Panc1 (cell line): ENCODE measurements at regions of chr7 and their contacts with region 1.

Region 1: GRCh38 chr7:101990811-101991418 is 173.5 kb downstream of the CUX1 start:
- DNase-seq: no peak
- ATAC-seq: no peak
- H3K4me3 ChIP-seq: no peak overlapping the region
- H3K27ac ChIP-seq: no peak overlapping the region
- H3K4me1 ChIP-seq: no peaks in the 10 kb centered on the region
- H3K27me3 ChIP-seq: no peaks in the 10 kb centered on the region
- CTCF ChIP-seq: no peak

Region 2: GRCh38 chr7:101333912-101334311 is 657.0 kb before region 1 on chr7:
- CTCF ChIA-PET with region 1: no interaction called
- POLR2A ChIA-PET with region 1: interaction called, 10 read pairs
- in situ Hi-C with region 1: no loop called
- intact Hi-C with region 1: no loop called
- DNase-seq: no peak
- ATAC-seq: no peak
- H3K4me3 ChIP-seq: no peak overlapping the region
- H3K27ac ChIP-seq: no peak overlapping the region
- H3K4me1 ChIP-seq: no peaks in the 10 kb centered on the region
- H3K27me3 ChIP-seq: no peaks in the 10 kb centered on the region
- CTCF ChIP-seq: no peak

Region 3: DNA sequence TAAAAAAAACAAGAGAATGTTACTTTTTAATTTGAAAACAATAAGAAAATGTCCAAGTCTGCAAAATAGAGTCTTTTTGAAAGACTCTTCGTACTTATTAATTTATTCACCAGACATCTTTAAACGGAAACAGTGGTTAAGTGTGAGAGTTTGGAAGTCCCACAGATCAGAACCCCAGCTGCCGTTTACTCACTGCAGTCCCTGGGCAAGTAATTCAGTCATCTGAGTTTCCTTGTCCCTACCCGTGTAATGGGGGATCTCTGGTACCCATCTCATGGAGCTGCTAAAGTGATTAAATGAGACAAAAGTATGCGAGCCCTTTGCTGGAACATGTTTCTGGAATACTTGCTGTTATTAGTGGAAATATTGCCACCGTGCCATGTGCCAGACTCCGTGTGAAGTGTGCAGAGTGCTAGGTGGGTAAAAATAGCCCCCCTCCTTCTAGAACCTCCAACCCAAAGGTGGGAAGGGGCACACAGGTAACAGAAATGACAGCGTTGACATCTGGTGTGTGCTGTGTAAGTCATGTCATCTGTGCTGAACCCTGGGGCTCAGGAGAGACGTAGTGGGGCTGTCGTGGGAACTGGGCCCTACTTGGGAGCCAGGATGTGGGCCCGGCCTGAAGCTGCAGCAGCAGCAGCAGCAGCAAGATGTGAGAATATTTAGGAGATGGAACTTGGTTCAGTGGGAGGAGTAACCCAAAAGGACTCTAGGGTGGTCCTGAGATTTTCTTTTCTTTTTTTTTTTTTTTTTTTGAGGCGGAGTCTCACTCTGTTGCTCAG is 33.0 kb before region 1 on chr7:
- CTCF ChIA-PET with region 1: no interaction called
- POLR2A ChIA-PET with region 1: interaction called, 14 read pairs
- in situ Hi-C with region 1: no loop called
- intact Hi-C with region 1: no loop called
- DNase-seq: no peak
- ATAC-seq: no peak
- H3K4me3 ChIP-seq: no peak overlapping the region
- H3K27ac ChIP-seq: no peak overlapping the region
- H3K4me1 ChIP-seq: no peaks in the 10 kb centered on the region
- H3K27me3 ChIP-seq: no peaks in the 10 kb centered on the region
- CTCF ChIP-seq: no peak

Region 4: GRCh38 chr7:102193806-102194205 is 202.9 kb after region 1 on chr7:
- CTCF ChIA-PET with region 1: interaction called, 10 read pairs
- POLR2A ChIA-PET with region 1: no interaction called
- in situ Hi-C with region 1: no loop called
- intact Hi-C with region 1: no loop called
- DNase-seq: no peak
- ATAC-seq: no peak
- H3K4me3 ChIP-seq: no peak overlapping the region
- H3K27ac ChIP-seq: no peak overlapping the region
- H3K4me1 ChIP-seq: no peaks in the 10 kb centered on the region
- H3K27me3 ChIP-seq: no peaks in the 10 kb centered on the region
- CTCF ChIP-seq: no peak